ENCODE measurements at regions of chr17 and their contacts with region 1.

Region 1: GRCh38 chr17:43994272-43995149 is 9.9 kb upstream of the NAGS start:
- DNase-seq: peak; percentile 84

Region 2: DNA sequence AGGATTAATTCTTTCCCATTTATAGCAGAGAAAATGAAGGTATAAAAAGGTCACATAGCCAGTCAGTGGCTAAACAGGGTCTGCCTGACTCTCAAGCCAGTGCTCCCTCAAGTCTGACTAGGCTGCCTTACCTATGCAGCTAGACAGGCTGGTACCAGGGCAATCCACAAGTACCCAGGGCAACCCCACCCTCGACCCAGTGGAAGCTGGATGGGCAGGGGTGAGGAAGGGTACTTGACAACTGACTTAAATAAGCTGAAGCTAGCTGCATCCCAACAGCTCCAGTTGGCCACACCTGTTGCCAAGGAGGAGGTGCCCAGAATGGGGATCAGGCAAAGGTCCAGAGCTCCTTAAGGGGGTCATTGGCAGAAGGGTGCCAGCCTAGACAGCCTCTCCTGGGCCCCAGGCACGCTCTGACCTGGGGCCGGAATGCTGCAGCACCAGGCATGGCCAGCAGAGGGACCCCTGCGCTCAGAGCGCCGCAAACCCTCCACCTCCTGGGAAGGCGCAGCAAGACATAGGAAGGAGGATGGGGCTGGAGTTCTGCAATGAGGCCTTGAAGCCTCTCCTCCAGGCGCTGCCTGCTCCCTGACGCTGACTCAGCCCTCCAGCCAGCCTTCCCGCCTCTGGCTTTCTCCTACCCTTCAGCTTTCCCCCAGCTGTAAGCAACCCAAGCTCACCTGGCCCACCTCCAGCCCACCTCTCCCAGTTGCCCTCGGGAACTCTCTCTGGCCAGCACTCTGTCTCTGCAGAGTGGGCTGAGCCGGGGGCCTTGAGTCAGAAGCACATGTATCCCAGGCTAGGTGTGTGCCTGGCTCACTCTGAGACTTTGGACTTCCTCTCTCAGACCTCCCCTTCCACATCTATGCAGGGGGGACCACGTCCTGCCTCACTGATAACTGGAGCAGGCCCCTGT is 116.0 kb before region 1 on chr17:
- intact Hi-C with region 1: loop called (anchors 10 kb)
- DNase-seq: peak; percentile 87

Measured in cardiac septum (tissue), 1 donor.